ENCODE measurements at regions of chr14 and their contacts with region 1.

Region 1: DNA sequence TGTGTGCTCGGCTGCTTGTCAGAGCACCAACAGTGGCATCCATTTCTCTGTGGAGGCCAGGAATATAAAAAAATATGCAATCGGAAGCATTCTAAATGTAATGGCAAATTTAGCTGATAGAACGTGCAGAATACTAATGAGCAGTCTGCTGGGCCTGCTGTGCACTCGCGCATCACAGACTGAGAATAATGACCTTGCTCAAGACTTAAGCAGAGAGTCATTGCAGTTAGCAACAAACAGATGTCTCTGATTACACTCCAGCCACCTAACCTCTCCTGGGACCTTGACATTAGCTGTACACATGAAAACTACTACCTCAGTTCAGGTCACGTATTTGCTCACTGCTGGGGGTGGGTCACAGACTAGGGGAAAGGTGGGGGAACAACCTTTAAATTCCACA is 269.2 kb upstream of the DAAM1 start:
- DNase-seq: peak; percentile 26
- ATAC-seq: peak; percentile 69
- H3K4me3 ChIP-seq: no peak overlapping the region
- H3K27ac ChIP-seq: no peak overlapping the region
- H3K4me1 ChIP-seq: no peaks in the 10 kb centered on the region
- H3K27me3 ChIP-seq: no peaks in the 10 kb centered on the region
- CTCF ChIP-seq: no peak
- EP300 ChIP-seq: no peak
- POLR2A ChIP-seq: no peak
- RAD21 ChIP-seq: no peak

Region 2: DNA sequence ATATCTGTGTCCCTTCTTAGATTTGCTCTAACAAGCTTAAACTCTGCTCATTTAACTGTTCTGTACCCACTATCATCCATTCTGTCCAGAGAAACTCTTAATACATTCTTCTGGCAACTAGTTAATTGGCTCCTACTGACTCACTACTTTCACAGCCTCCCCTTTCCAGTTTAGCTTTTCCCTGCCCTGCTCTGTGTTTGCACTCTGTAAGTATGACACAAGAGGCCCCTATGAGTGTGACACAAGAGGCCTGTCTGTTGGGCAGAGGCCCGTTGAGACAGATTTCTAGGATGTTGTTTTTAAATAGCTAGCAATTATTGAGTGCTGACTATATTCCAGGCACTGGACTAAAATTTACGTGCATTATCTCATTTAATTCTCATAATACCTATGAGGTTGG is 23.3 kb after region 1 on chr14:
- CTCF ChIA-PET with region 1: no interaction called
- POLR2A ChIA-PET with region 1: interaction called, 3 read pairs
- RAD21 ChIA-PET with region 1: no interaction called
- SMC1A ChIA-PET with region 1: interaction called, 13 read pairs
- in situ Hi-C with region 1: no loop called
- intact Hi-C with region 1: no loop called
- DNase-seq: no peak
- ATAC-seq: peak; percentile 33; the same call in 2 of the 3 replicates
- H3K4me3 ChIP-seq: no peak overlapping the region
- H3K27ac ChIP-seq: no peak overlapping the region
- H3K4me1 ChIP-seq: no peaks in the 10 kb centered on the region; the same call in 1 of the 2 replicates
- H3K27me3 ChIP-seq: no peaks in the 10 kb centered on the region
- CTCF ChIP-seq: no peak
- EP300 ChIP-seq: no peak
- POLR2A ChIP-seq: no peak
- RAD21 ChIP-seq: no peak

Region 3: DNA sequence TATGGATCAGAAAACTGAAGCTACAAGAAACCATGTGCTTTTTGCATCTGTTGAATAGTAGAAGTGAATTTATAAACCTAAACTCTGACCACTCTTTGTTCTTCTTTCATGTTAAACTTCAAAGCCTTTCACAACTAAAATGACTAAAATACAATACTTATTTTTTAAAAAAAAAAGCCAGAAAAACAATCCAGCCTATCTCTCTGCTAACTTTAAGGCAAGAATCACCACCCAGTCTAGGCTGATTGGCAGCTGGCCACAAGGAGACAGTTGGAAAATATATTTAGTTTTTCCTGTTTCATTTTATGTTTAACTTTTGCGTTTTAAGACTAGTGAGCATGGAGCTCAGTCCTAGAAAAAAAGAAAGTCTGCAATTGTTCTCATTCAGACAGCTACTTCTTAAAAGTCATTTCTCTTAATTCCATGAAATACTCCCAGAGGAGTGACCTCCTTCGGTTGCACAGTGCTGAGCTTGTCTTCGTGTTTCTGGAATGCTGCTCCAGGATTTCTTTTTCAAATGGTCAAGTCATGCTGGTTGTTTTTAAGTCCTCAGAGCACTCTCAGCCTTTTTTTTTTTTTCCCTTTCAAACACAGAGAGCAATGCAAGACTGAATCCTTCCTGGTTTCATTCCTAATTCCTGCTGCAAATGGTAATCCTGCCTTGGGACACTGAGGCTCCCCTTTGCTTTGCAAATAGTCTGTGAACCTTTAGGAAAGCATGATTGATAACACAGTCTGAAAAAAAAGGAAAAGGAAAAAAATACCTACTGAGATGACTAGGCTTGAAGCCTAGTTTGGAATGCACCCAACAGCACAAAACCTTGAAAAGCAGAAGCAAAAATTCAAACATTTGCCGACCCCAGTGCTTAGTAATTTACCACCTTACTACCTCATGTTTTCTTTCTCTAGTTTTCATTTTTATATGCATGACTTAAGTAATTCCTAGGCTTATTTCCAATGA is 36.0 kb after region 1 on chr14:
- CTCF ChIA-PET with region 1: interaction called, 3 read pairs
- POLR2A ChIA-PET with region 1: no interaction called
- RAD21 ChIA-PET with region 1: interaction called, 5 read pairs
- SMC1A ChIA-PET with region 1: interaction called, 14 read pairs
- in situ Hi-C with region 1: no loop called
- intact Hi-C with region 1: no loop called
- DNase-seq: peak; percentile 55
- ATAC-seq: peak; percentile 81
- H3K4me3 ChIP-seq: peak overlapping the region; percentile 38; the same call in 1 of the 2 replicates
- H3K27ac ChIP-seq: peak overlapping the region; percentile 86
- H3K4me1 ChIP-seq: peaks cover 18% of the 10 kb centered on the region
- H3K27me3 ChIP-seq: no peaks in the 10 kb centered on the region
- CTCF ChIP-seq: no peak
- EP300 ChIP-seq: peak; percentile 68 to 77; a peak in 3 of 4 replicates
- POLR2A ChIP-seq: no peak
- RAD21 ChIP-seq: no peak

Measured in GM12878 (cell line).